MCF 10A (cell line): ENCODE measurements at regions of chr3 and their contacts with region 1.

Region 1: DNA sequence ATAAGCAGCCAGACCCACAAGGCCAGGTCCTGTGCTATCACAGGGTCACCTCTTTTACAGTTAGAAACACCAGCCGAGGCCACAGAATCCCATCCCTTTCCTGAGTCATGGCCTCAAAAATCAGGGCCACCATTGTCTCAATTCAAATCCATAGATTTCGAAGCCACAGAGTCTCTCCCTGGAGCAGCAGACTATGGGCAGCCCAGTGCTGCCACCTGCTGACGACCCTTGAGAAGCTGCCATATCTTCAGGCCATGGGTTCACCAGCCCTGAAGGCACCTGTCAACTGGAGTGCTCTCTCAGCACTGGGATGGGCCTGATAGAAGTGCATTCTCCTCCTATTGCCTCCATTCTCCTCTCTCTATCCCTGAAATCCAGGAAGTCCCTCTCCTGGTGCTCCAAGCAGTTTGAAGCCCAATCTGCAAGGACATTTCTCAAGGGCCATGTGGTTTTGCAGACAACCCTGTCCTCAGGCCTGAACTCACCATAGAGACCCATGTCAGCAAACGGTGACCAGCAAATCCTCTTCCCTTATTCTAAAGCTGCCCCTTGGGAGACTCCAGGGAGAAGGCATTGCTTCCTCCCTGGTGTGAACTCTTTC is 39.6 kb downstream of the TGM4 start:
- DNase-seq: peak; percentile 84
- H3K4me3 Mint-ChIP-seq: no peak overlapping the region
- H3K27ac Mint-ChIP-seq: no peak overlapping the region
- H3K4me1 Mint-ChIP-seq: peaks cover 14% of the 10 kb centered on the region
- H3K27me3 Mint-ChIP-seq: no peaks in the 10 kb centered on the region
- CTCF ChIP-seq: peak; percentile 79

Region 2: DNA sequence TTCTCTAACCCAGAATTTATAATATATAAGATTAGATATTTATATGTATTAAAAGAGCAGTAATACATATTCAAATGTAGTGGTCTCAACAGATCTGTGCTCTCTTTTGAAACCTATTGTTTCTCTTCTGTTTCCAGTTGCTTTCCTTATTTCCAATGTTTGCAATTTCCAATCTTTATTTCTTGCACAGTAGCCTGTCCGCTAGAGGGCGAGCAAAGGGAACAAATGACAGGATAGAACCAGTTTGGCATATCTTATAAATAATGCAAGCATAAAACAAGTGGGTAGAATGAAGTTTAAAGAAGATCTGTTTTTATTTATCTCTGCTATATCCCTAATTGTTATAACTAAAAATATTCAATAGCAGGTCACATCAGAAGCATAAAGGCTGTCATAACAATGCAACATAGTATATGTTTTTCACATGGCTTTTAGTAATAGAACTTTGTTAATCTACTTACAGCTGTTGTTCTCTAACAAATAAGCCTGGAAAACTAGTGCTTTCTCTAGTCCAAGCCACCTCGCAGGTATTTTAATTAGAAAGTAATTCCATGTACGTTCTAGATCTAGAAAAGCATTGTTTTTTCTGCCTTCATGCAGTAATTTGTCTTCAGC is 590.5 kb before region 1 on chr3:
- CTCF ChIA-PET with region 1: no interaction called
- POLR2A ChIA-PET with region 1: no interaction called
- intact Hi-C with region 1: loop called (anchors 1 kb)
- DNase-seq: peak; percentile 73
- H3K4me3 Mint-ChIP-seq: no peak overlapping the region
- H3K27ac Mint-ChIP-seq: no peak overlapping the region
- H3K4me1 Mint-ChIP-seq: no peaks in the 10 kb centered on the region
- H3K27me3 Mint-ChIP-seq: no peaks in the 10 kb centered on the region
- CTCF ChIP-seq: peak; percentile 70

Region 3: DNA sequence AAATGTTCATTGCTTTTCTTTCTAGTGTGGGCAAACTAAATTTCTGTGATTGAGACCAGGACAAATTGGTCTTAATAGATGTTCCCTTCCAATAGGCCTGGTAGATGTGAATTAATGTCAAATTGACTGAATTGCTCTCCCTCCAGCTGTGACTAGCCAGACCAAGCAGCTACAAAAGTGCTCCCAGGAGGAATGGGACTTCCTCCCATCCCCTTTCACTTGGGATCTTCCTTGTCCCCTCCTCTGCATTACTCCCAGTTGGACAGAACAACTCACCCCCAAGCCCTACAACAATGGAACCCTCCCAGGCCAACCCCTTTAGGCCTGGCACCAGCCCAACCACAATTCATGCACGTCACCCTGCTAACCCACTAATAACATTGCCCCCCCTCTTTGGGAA is 378.6 kb before region 1 on chr3:
- CTCF ChIA-PET with region 1: interaction called, 23 read pairs
- POLR2A ChIA-PET with region 1: interaction called, 3 read pairs
- intact Hi-C with region 1: loop called (anchors 1 kb)
- DNase-seq: no peak
- H3K4me3 Mint-ChIP-seq: no peak overlapping the region
- H3K27ac Mint-ChIP-seq: no peak overlapping the region
- H3K4me1 Mint-ChIP-seq: no peaks in the 10 kb centered on the region
- H3K27me3 Mint-ChIP-seq: peaks cover 39% of the 10 kb centered on the region
- CTCF ChIP-seq: no peak

Region 4: DNA sequence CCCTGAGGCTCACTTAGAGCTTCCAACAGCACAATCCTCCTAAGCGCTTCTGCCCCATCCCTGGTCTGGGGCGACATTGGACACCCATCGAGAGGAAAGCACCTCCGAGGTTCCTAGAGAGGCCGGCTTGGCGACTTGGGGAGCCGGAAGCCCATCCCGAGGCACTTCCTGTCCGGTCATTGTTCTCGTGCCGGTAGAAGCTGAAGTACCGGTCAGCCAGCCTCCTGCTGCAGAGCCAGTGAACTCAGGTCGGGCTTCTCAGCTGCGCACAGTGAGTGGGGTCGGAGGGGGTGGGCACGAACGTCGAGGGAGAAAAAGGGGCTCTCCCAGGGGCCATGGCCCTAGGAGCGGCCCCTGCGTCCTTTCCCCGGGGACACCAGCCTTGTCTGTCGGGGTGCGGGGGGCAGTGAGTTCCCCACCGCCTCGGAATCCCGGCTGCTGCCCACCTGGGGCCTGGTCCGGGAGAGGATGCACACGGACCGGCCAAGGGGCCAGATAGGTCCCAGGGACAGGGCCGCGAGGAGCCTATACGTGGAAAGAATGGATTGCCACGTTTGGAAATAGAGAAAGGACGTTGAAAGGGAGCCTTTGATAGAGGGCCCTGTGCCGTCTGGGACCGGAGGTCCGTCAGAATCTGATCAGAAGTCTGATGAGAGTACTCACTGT is 265.3 kb before region 1 on chr3 and contains the start of gene ZNF35:
- CTCF ChIA-PET with region 1: interaction called, 4 read pairs
- POLR2A ChIA-PET with region 1: interaction called, 3 read pairs
- intact Hi-C with region 1: loop called (anchors 1 kb)
- DNase-seq: peak; percentile 89
- H3K4me3 Mint-ChIP-seq: peak within 1 kb of the TSS; percentile 91
- H3K27ac Mint-ChIP-seq: peak within 1 kb of the TSS; percentile 87
- H3K4me1 Mint-ChIP-seq: peaks cover 10% of the 10 kb centered on the region
- H3K27me3 Mint-ChIP-seq: no peaks in the 10 kb centered on the region
- CTCF ChIP-seq: no peak
- total RNA-seq, gene ZNF35: 9.9 and 12.7 TPM in 2 replicates

Region 5: GRCh38 chr3:44883999-44884431 is 30.0 kb before region 1 on chr3:
- CTCF ChIA-PET with region 1: interaction called, 13 read pairs
- POLR2A ChIA-PET with region 1: interaction called, 5 read pairs
- intact Hi-C with region 1: loop called (anchors 2 kb)
- DNase-seq: peak; percentile 96
- H3K4me3 Mint-ChIP-seq: peak overlapping the region; percentile 30
- H3K27ac Mint-ChIP-seq: peak overlapping the region; percentile 98
- H3K4me1 Mint-ChIP-seq: peaks cover 47% of the 10 kb centered on the region
- H3K27me3 Mint-ChIP-seq: no peaks in the 10 kb centered on the region
- CTCF ChIP-seq: no peak